ENCODE measurements at regions of chr4 and their contacts with region 1.

Region 1: DNA sequence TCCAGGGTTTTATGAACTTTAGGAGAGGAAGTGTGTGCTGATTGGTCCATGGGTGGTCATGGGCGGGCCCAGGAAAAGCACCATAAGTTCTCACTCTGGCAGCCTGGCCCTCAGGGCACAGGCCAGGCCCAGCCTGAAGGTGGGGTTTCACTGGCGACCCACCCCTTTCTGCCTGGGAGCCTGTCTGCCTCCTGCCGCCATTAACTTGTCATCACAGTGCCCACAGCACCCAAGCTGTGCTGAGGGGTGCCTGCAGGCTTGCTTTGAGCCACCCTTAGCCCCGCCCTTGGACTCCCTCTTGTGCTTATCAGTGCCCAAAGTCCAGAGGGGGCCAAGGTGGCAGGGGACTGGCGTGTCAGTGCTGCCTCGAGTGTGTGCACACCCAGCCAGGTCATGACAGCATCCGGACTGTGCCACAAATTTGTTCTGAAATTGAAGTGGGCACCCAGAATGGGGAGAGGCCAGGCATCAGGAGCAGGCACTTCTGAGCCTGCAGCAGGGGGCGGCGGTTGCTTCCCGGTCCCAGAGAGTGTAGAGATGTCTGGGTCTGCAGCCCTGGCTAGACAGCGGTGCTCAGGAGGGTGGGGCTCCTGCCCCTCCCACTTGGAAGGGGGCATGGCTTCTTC is 455.6 kb downstream of the TMA16 start:
- DNase-seq: no peak
- H3K4me3 ChIP-seq: no peak overlapping the region
- CTCF ChIP-seq: no peak
- POLR2A ChIP-seq: no peak

Region 2: GRCh38 chr4:164012396-164013027 is 62.4 kb after region 1 on chr4:
- intact Hi-C with region 1: no loop called
- DNase-seq: no peak
- H3K4me3 ChIP-seq: no peak overlapping the region
- CTCF ChIP-seq: no peak
- POLR2A ChIP-seq: no peak

Region 3: GRCh38 chr4:165031436-165032205 is 1081.5 kb after region 1 on chr4 and contains the start of gene TRIM60:
- intact Hi-C with region 1: loop called (anchors 5 kb)
- DNase-seq: no peak
- H3K4me3 ChIP-seq: no peak within 1 kb of the TSS
- CTCF ChIP-seq: no peak
- POLR2A ChIP-seq: no peak
- total RNA-seq, gene TRIM60: not detected

Region 4: GRCh38 chr4:165053645-165054044 is 1103.6 kb after region 1 on chr4 and contains the start of gene TRIM75:
- intact Hi-C with region 1: no loop called
- DNase-seq: no peak
- H3K4me3 ChIP-seq: no peak within 1 kb of the TSS
- CTCF ChIP-seq: no peak
- POLR2A ChIP-seq: no peak
- total RNA-seq, gene TRIM75: not detected

Measured in lower leg skin (tissue), 4 donors.